AG04449 (cell line): ENCODE measurements at regions of chr1 and their contacts with region 1.

Region 1: DNA sequence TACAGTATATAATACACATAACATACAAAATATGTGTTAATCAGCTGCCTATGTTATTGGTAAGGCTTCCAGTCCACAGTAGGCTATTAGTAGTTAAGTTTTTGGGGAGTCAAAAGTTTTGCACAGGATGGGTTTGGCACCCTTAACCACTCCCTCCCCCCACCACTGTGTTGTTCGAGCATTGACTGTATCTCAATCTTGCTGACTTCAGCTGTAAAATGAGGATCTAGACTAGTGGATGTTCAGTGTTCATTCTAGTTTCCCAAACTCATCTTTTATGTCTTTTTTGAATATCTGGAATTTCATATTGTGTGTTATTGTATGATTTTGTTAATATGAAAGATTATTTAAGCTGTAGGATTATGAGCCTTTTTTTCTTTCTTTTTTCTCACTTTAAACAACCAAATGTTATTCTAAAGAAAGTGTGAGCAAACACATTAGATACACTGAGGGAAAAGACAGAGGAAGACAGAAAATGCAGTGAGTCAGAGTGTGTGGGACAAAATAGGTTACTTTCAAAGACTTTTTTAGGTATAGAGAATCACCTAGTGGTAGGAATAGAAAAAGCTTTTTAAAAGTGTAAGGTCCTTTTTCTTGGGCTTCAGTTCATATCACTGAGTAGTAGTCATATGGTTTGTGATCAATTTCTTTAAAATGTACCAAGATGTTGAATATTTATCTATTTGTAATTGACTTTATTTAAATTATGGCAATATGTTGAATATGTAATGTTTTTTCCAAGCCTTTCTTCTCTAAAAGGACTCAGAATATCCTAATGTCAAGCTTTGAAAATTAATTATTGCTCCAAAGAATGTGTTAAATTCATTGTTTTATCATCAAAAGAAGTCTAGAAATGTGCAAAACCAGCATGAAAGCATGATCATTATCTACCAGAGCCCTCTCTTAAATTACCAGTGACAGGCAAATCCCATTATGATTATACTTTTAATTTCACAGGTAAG is 17.9 kb upstream of the CENPF start:
- DNase-seq: no peak
- H3K4me3 ChIP-seq: no peak overlapping the region
- CTCF ChIP-seq: peak; percentile 45

Region 2: DNA sequence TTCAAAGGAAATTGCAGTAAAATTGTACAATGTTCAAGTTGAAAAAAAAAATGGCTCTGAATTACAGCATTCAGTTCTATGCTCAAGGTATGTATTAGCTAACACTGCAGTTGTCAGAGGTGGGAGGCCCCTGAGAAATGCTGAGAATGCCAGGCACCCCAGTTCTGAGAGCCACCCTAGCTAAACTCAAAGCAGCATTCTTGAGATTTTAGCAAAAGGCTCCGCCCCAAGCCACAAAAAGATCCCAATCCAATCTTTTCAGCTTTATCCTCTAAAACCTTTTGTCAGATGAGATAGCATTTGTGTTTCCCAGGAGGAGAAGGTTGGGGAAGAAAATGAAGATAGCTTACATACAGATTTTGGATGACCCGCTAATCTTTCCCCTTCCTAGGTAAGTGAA is 235.3 kb before region 1 on chr1:
- CTCF ChIA-PET with region 1: interaction called, 493 read pairs
- POLR2A ChIA-PET with region 1: no interaction called
- DNase-seq: no peak
- H3K4me3 ChIP-seq: no peak overlapping the region
- CTCF ChIP-seq: no peak

Region 3: GRCh38 chr1:214386747-214387146 is 198.3 kb before region 1 on chr1:
- CTCF ChIA-PET with region 1: interaction called, 31 read pairs
- POLR2A ChIA-PET with region 1: no interaction called
- DNase-seq: no peak
- H3K4me3 ChIP-seq: no peak overlapping the region
- CTCF ChIP-seq: no peak

Region 4: GRCh38 chr1:214445831-214446614 is 139.1 kb before region 1 on chr1:
- CTCF ChIA-PET with region 1: interaction called, 11 read pairs
- POLR2A ChIA-PET with region 1: no interaction called
- DNase-seq: peak; percentile 89
- H3K4me3 ChIP-seq: no peak overlapping the region
- CTCF ChIP-seq: no peak

Region 5: GRCh38 chr1:214551436-214552173 is 33.5 kb before region 1 on chr1 and contains the start of gene PTPN14:
- CTCF ChIA-PET with region 1: interaction called, 22 read pairs
- POLR2A ChIA-PET with region 1: interaction called, 5 read pairs
- DNase-seq: peak; percentile 67
- H3K4me3 ChIP-seq: peak within 1 kb of the TSS; percentile 86
- CTCF ChIP-seq: peak; percentile 55

Region 6: GRCh38 chr1:214573386-214574358 is 11.4 kb before region 1 on chr1:
- CTCF ChIA-PET with region 1: interaction called, 20 read pairs
- POLR2A ChIA-PET with region 1: no interaction called
- DNase-seq: no peak
- H3K4me3 ChIP-seq: no peak overlapping the region
- CTCF ChIP-seq: no peak

Region 7: GRCh38 chr1:214702556-214702955 is 117.5 kb after region 1 on chr1:
- CTCF ChIA-PET with region 1: no interaction called
- POLR2A ChIA-PET with region 1: no interaction called
- DNase-seq: no peak
- H3K4me3 ChIP-seq: no peak overlapping the region
- CTCF ChIP-seq: no peak

Region 8: GRCh38 chr1:214777364-214777763 is 192.3 kb after region 1 on chr1:
- CTCF ChIA-PET with region 1: no interaction called
- POLR2A ChIA-PET with region 1: no interaction called
- DNase-seq: no peak
- H3K4me3 ChIP-seq: no peak overlapping the region
- CTCF ChIP-seq: no peak